ENCODE measurements at regions of chr9 and their contacts with region 1.

Region 1: DNA sequence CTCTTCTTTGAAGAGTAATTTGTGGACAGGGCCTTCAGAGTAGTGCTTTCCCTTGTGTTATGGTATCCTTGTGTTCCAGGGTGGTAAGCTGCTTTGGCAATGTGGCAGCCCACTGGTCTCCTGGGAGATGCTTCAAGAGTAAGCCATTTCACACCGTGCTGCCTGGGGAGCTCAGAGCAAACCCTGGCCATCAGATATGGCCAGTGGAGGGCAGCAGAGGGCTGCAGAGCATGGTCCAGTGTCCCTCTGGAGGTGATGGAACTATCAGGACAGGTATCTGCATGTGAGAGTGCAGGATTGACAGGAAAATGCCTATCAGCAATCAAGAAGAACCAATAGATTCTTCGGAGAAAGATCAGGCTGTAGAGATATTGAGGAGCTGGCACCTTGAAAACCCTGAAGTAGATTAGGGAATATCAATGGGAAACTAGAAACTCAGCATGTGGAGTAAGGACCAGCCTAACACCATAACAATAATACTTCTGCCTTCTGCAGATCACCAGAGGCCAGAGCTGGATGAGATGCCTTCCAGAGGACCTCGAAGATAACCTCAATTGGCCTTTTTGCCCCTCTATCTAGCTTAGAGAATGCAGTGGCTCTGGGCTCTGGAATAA is 90.8 kb downstream of the PLPPR1 start:
- DNase-seq: peak; percentile 76
- H3K4me3 Mint-ChIP-seq: no peak overlapping the region
- H3K27ac Mint-ChIP-seq: no peak overlapping the region
- H3K4me1 Mint-ChIP-seq: no peaks in the 10 kb centered on the region
- H3K27me3 Mint-ChIP-seq: peaks cover 33% of the 10 kb centered on the region
- CTCF ChIP-seq: peak; percentile 69

Region 2: DNA sequence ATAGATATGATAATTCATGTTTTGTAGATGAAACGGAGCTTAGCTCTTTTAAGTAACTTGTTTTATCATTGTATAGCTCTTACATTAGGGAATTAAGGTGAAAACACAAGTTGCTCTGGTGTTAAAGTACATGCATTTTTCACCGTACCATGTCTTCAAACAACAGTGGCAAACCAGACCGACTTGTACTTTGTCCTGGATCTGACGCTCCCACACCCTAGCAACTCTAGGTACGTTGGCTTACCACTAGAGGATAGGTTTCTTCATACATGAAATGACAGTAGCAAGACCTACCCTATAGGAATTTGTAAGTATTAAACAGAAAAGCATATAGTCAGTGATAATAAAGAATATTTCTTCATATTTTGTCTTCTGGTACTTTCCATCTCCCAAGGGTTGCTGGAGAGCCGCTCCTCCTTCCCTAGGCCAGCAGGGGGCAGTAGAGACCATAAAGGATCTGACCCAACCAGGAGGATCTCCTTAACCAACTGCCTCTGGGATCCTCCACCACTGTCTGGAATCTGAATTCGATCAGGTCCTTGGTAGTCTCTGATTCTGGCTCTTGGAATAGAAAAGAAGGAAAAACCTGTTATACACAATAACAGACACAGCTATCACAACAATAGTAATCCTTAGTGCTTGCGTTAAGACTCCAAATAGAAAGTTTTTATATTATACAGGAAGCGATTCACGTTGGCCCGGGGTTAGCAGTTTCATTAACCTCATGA is 404.8 kb before region 1 on chr9:
- CTCF ChIA-PET with region 1: no interaction called
- intact Hi-C with region 1: loop called (anchors 5 kb)
- DNase-seq: peak; percentile 67
- H3K4me3 Mint-ChIP-seq: no peak overlapping the region
- H3K27ac Mint-ChIP-seq: no peak overlapping the region
- H3K4me1 Mint-ChIP-seq: no peaks in the 10 kb centered on the region
- H3K27me3 Mint-ChIP-seq: peaks cover 21% of the 10 kb centered on the region
- CTCF ChIP-seq: peak; percentile 71

Region 3: GRCh38 chr9:101235105-101235866 is 116.0 kb after region 1 on chr9:
- CTCF ChIA-PET with region 1: interaction called, 11 read pairs
- intact Hi-C with region 1: loop called (anchors 1 kb)
- DNase-seq: no peak
- H3K4me3 Mint-ChIP-seq: no peak overlapping the region
- H3K27ac Mint-ChIP-seq: no peak overlapping the region
- H3K4me1 Mint-ChIP-seq: no peaks in the 10 kb centered on the region
- H3K27me3 Mint-ChIP-seq: no peaks in the 10 kb centered on the region
- CTCF ChIP-seq: no peak

Region 4: GRCh38 chr9:101311758-101312420 is 192.6 kb after region 1 on chr9:
- CTCF ChIA-PET with region 1: interaction called, 21 read pairs
- intact Hi-C with region 1: loop called (anchors 1 kb)
- DNase-seq: peak; percentile 15
- H3K4me3 Mint-ChIP-seq: no peak overlapping the region
- H3K27ac Mint-ChIP-seq: no peak overlapping the region
- H3K4me1 Mint-ChIP-seq: peaks cover 18% of the 10 kb centered on the region
- H3K27me3 Mint-ChIP-seq: peaks cover 14% of the 10 kb centered on the region
- CTCF ChIP-seq: peak; percentile 45

Region 5: DNA sequence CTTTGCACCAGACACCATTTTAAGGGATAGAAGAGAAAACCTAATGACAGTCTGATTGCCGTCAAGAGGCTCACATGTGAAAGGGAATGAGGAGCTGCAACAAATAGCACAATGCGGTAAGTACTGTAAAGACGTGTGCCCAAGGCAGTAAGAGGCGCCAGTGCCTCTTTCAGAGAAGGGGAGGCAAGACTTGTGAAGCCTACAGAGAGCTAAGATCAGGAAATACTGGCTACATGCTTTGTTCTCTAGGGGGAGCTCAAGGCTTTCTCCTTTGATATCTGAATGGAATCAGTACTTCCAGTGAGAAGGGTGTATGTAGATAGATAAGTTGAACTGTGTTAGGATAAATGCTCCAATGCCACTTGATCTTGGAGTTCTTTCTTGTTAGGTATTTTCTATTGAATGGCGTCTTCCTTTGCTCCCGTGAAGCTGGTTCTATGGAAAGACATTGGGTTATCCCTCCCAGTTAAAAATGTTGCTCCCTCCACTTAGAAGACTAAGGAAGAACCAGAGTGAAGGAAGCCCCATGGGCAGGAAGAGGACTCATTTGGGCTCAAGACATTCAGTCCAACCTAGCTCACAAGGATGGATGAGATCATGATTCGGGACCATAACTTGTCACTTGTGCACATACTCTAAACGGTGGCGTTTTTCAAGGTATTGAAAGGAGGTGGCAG is 339.8 kb after region 1 on chr9:
- CTCF ChIA-PET with region 1: no interaction called
- intact Hi-C with region 1: loop called (anchors 10 kb)
- DNase-seq: peak; percentile 47
- H3K4me3 Mint-ChIP-seq: no peak overlapping the region
- H3K27ac Mint-ChIP-seq: peak overlapping the region; percentile 22
- H3K4me1 Mint-ChIP-seq: peaks cover 27% of the 10 kb centered on the region
- H3K27me3 Mint-ChIP-seq: no peaks in the 10 kb centered on the region
- CTCF ChIP-seq: peak; percentile 38

Region 6: GRCh38 chr9:101530077-101530711 is 410.9 kb after region 1 on chr9:
- CTCF ChIA-PET with region 1: no interaction called
- intact Hi-C with region 1: loop called (anchors 1 kb)
- DNase-seq: peak; percentile 69
- H3K4me3 Mint-ChIP-seq: no peak overlapping the region
- H3K27ac Mint-ChIP-seq: no peak overlapping the region
- H3K4me1 Mint-ChIP-seq: no peaks in the 10 kb centered on the region
- H3K27me3 Mint-ChIP-seq: no peaks in the 10 kb centered on the region
- CTCF ChIP-seq: peak; percentile 66